Sciatic nerve (tissue), 2 donors: ENCODE measurements at regions of chr16 and their contacts with region 1.

Region 1: GRCh38 chr16:11224096-11224893 is 31.7 kb downstream of the SOCS1 start:
- DNase-seq: no peak
- ATAC-seq: peak; percentile 94

Region 2: DNA sequence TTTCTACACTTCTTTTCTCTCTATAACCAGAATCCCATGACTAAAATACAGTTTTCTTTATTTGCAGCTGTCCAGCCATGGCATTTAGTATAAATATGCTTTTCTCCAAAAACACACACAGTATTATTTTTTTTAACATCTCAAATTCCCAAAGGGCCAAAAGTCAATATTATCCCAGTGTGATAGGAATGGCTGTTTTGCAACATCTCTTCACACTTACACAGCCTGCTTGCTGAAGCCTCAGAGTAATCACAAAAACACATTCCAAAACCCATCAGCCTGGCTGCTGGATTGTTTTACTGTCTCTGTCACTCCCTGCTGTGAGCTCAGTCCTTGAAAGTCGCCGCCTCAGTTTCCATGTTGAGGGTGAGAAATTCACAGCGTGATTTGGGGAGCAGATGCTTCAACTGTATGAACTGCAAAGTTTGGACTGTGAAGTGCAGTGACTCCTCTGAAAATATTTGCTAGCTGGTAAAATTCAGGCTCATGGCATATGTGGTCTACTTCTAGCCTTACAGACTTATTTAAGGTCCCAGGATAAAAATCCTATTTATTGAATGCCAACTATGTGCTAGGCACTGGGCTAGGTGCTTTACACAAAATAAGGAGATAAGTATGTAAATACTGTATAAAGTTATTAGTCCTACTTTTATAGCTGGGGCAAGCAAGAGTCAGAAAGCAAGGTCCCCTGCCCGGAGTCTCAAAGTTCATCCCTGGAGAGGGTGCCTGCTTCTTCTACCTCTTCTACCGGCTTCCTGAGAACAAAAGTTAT is 84.8 kb before region 1 on chr16:
- intact Hi-C with region 1: loop called (anchors 10 kb)
- DNase-seq: no peak
- ATAC-seq: peak; percentile 89

Region 3: GRCh38 chr16:11190588-11191560 is 33.4 kb before region 1 on chr16:
- intact Hi-C with region 1: no loop called
- DNase-seq: no peak
- ATAC-seq: no peak

Region 4: DNA sequence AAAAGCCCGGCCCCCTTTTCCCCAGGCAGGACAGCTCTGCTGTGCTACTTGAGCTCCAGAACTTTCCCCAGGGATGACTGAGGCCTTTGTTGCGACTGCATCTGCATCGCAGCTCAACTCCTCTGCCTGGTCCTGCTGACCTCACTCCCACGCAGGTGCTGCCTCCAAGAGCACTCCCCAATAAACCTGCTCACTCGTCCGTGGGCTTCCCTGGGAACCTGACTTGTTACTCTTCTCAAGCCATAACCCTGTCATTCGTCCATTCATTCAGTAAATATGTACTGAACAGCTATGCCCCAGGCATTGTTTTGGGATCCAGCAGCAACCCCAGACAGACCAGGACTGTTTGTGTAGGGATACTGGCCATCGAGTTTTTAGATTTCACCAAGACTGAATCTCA is 109.4 kb after region 1 on chr16:
- intact Hi-C with region 1: no loop called
- DNase-seq: no peak
- ATAC-seq: no peak

Region 5: DNA sequence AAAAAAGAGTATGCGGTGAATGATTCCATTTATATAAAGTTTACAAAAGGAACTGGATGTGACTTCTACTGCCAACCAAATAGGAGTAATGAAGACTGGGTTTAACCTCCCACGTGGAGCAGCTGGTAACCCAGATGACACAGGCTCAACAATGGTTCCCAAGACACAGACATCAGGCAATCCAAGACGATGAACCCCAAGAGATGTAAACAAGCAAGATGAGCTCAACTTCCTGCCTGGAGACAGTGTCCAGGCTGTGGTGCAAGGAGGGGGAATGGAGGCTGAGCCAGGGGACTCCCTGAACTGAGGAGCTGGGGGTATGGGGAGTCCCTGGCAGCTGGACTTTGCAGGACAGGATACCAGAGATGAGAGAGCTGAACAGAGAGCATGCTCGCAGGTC is 257.7 kb after region 1 on chr16:
- intact Hi-C with region 1: no loop called
- DNase-seq: no peak
- ATAC-seq: peak; percentile 86